Heart left ventricle (tissue), 16 donors: ENCODE measurements at regions of chr13 and their contacts with region 1.

Region 1: GRCh38 chr13:51590971-51591627 is 6.8 kb downstream of the WDFY2 start:
- DNase-seq: peak in 1 of 5 donors; percentile 14
- ATAC-seq: peak; percentile 57 to 98 (median 88)
- H3K4me3 ChIP-seq: peak overlapping the region in 2 of 12 donors; percentile 2 to 6
- H3K27ac ChIP-seq: peak overlapping the region; percentile 11 to 78 (median 43)
- H3K4me1 ChIP-seq: peaks cover 0 to 69% (median 26%) of the 10 kb centered on the region in 12 donors
- H3K27me3 ChIP-seq: no peaks in the 10 kb centered on the region
- CTCF ChIP-seq: peak in 1 of 12 donors; percentile 10
- POLR2A ChIP-seq: no peak

Region 2: GRCh38 chr13:51632591-51633362 is 41.7 kb after region 1 on chr13:
- intact Hi-C with region 1: loop called in 1 of 10 experiments (anchors 5 kb)
- DNase-seq: peak in 1 of 5 donors; percentile 31
- ATAC-seq: peak in 2 of 4 donors; percentile 20 to 57
- H3K4me3 ChIP-seq: no peak overlapping the region
- H3K27ac ChIP-seq: peak overlapping the region in 1 of 12 donors; percentile 42
- H3K4me1 ChIP-seq: peaks cover 0 to 61% (median 15%) of the 10 kb centered on the region in 12 donors
- H3K27me3 ChIP-seq: no peaks in the 10 kb centered on the region
- CTCF ChIP-seq: no peak
- POLR2A ChIP-seq: no peak